Body of pancreas (tissue), 4 donors: ENCODE measurements at regions of chr18 and their contacts with region 1.

Region 1: DNA sequence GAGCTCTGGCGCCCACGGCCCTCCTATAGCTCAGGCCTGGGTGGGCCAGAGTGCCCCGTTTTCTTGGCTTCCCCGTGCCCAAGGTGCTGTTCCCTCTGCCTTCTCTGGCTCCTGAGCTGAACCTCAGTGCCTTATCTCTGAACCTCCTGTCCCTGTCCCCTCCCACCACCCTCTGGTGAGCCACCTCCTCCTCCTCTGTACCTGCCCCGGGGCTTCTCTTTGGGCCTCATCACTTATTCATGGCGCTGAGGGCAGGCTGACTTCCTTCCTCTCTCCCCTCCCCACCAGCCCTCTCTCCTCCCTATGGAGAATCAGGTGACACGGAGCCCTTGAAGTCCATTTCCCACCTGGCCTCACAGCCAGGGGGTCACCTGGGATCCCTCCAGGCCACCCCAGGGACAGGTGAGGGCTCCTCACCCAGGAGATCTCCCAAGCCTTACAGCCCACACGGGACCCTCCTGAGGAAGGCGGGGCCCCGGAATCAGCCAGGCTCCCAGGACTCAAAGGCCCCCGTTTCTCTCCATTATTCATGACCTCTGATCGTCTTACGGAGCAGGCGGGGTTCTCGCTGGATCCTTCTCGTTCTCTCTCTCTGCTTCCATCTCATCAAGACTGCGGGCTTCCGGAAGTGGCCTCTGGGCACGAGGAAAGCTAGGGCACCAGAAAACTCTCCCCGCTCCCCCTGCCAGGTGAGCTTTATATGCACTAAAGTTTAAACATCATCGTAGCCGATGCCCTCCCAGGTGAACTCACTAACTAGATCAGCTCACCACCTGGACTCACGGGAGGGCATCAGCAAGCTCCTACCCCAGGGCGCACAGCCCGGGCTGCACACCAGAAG is at the start of gene LOXHD1:
- DNase-seq: no peak
- ATAC-seq: no peak
- H3K4me3 ChIP-seq: no peak within 1 kb of the TSS
- H3K27ac ChIP-seq: no peak within 1 kb of the TSS
- H3K4me1 ChIP-seq: no peaks in the 10 kb centered on the region
- H3K27me3 ChIP-seq: no peaks in the 10 kb centered on the region
- CTCF ChIP-seq: no peak
- POLR2A ChIP-seq: no peak
- total RNA-seq, gene LOXHD1: 0.26 TPM in 1 of 2 donors, not detected in the other

Region 2: DNA sequence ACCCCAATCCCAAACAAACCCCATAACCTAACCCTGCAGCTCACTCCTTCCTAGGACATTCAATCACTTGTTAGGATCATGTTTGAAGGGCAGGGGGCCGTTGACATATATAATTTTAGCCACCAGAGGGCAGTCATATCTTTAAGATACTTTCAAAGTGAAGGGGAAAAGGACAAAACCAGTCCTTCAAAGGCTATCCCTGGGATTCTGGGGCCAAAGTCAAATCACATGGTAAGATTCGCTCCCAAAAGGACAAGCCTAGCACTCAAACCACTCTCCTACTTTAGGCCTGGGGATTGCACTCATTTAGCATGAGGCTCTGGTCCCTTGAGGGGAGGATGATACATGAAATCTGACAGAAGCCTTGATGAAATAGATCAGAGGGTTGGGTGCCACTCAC is 508.5 kb before region 1 on chr18:
- intact Hi-C with region 1: loop called (anchors 5 kb)
- DNase-seq: peak; percentile 38 to 56 (median 40)
- ATAC-seq: peak; percentile 59
- H3K4me3 ChIP-seq: no peak overlapping the region
- H3K27ac ChIP-seq: no peak overlapping the region
- H3K4me1 ChIP-seq: no peaks in the 10 kb centered on the region
- H3K27me3 ChIP-seq: no peaks in the 10 kb centered on the region
- CTCF ChIP-seq: peak; percentile 23 to 68 (median 63)
- POLR2A ChIP-seq: no peak

Region 3: GRCh38 chr18:46563317-46563716 is 94.0 kb before region 1 on chr18:
- intact Hi-C with region 1: no loop called
- DNase-seq: no peak
- ATAC-seq: no peak
- H3K4me3 ChIP-seq: no peak overlapping the region
- H3K27ac ChIP-seq: no peak overlapping the region
- H3K4me1 ChIP-seq: no peaks in the 10 kb centered on the region
- H3K27me3 ChIP-seq: no peaks in the 10 kb centered on the region
- CTCF ChIP-seq: no peak
- POLR2A ChIP-seq: no peak

Region 4: GRCh38 chr18:47215554-47216138 is 558.3 kb after region 1 on chr18:
- intact Hi-C with region 1: no loop called
- DNase-seq: peak in 3 of 4 donors; percentile 12 to 23 (median 17)
- ATAC-seq: no peak
- H3K4me3 ChIP-seq: no peak overlapping the region
- H3K27ac ChIP-seq: no peak overlapping the region
- H3K4me1 ChIP-seq: no peaks in the 10 kb centered on the region
- H3K27me3 ChIP-seq: no peaks in the 10 kb centered on the region
- CTCF ChIP-seq: peak in 6 of 7 experiments; percentile 41 to 77 (median 64)
- POLR2A ChIP-seq: no peak